HCT116 (cell line): ENCODE measurements at regions of chr6 and their contacts with region 1.

Region 1: DNA sequence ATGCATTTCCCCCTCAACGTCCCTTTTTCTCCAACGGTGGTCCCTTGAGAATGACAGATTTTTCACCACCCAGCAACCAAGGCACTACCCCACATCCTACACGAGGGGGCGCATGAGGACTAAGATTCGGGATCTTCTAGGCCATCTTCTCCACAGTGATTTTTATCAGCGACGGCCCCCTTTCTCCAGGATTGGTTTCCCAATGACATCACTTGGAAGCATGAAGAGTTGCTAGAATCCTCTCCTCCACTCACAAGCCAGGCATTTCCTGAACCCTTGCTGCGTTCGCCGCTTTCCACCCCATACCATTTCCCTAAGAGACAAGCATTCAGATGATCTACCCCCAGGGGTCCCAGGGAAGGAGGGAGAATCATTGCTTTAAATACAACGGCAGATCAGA is 252.0 kb downstream of the HIVEP2 start:
- DNase-seq: peak; percentile 41
- ATAC-seq: peak; percentile 97
- H3K4me3 ChIP-seq: no peak overlapping the region
- H3K27ac ChIP-seq: no peak overlapping the region
- H3K4me1 ChIP-seq: 0 out of 4 replicates have a peak, but pooled peaks cover 0 to 2% of the 10 kb centered on the region in 2 experiments
- H3K27me3 ChIP-seq: no peaks in the 10 kb centered on the region
- CTCF ChIP-seq: peak; percentile 86 to 92 (median 87); a peak in 5 of 6 replicates
- POLR2A ChIP-seq: no peak
- RAD21 ChIP-seq: peak; percentile 96

Region 2: DNA sequence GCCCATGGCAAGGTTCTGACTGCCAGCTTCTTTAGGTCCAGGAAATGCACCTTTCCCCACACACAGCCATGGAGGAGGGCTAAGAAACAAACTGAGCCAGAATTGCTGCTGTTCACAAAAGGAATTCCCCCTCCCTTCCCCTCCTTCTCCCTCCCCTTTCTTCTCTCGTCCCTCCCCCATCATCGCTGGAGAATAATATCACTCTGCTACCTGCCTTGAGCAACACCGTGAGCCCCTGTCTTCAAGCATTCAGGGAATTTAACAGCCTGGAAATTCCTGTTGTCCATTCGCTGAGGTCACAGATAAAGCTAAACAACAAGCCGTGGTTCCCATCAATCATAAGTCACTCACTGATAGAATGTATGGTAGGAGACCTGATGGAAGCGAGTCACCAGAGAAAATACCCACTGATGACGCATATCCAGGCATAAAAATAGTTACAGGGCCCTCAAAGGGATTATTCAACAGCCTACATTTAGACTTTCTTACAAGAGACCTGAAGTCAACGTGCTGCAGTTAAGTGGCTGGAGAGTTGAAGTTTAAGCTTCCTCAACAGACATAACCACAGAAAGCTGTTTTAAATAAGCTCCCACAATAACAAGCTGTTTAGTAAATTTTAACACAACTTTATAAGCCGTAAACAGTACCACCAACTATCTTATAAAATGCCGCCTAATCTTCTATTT is 192.4 kb after region 1 on chr6:
- CTCF ChIA-PET with region 1: no interaction called
- POLR2A ChIA-PET with region 1: no interaction called
- RAD21 ChIA-PET with region 1: no interaction called
- intact Hi-C with region 1: loop called (anchors 2 kb)
- DNase-seq: peak; percentile 94
- ATAC-seq: peak; percentile 91
- H3K4me3 ChIP-seq: peak overlapping the region; percentile 37 to 51
- H3K27ac ChIP-seq: peak overlapping the region; percentile 58
- H3K4me1 ChIP-seq: peaks cover 19 to 38% of the 10 kb centered on the region in 2 experiments
- H3K27me3 ChIP-seq: no peaks in the 10 kb centered on the region
- CTCF ChIP-seq: no peak
- POLR2A ChIP-seq: no peak
- RAD21 ChIP-seq: peak; percentile 46; the same call in 1 of the 2 replicates

Region 3: GRCh38 chr6:142946181-142946923 is 253.4 kb after region 1 on chr6:
- CTCF ChIA-PET with region 1: no interaction called
- POLR2A ChIA-PET with region 1: no interaction called
- RAD21 ChIA-PET with region 1: no interaction called
- intact Hi-C with region 1: loop called (anchors 2 kb)
- DNase-seq: peak; percentile 95
- ATAC-seq: peak; percentile 69
- H3K4me3 ChIP-seq: peak overlapping the region; percentile 74 to 80
- H3K27ac ChIP-seq: peak overlapping the region; percentile 69
- H3K4me1 ChIP-seq: peaks cover 20 to 32% of the 10 kb centered on the region in 2 experiments; a peak in 3 of 4 replicates
- H3K27me3 ChIP-seq: no peaks in the 10 kb centered on the region
- CTCF ChIP-seq: no peak
- POLR2A ChIP-seq: no peak
- RAD21 ChIP-seq: no peak

Region 4: GRCh38 chr6:143026696-143027449 is 333.9 kb after region 1 on chr6:
- CTCF ChIA-PET with region 1: interaction called, 16 read pairs
- POLR2A ChIA-PET with region 1: no interaction called
- RAD21 ChIA-PET with region 1: interaction called, 3 read pairs
- intact Hi-C with region 1: loop called (anchors 1 kb)
- DNase-seq: peak; percentile 7
- ATAC-seq: peak; percentile 83
- H3K4me3 ChIP-seq: no peak overlapping the region
- H3K27ac ChIP-seq: no peak overlapping the region
- H3K4me1 ChIP-seq: no peaks in the 10 kb centered on the region
- H3K27me3 ChIP-seq: no peaks in the 10 kb centered on the region
- CTCF ChIP-seq: peak; percentile 60 to 70 (median 67); a peak in 5 of 6 replicates
- POLR2A ChIP-seq: no peak
- RAD21 ChIP-seq: peak; percentile 77

Region 5: GRCh38 chr6:143279385-143279784 is 586.4 kb after region 1 on chr6:
- CTCF ChIA-PET with region 1: interaction called, 6 read pairs
- POLR2A ChIA-PET with region 1: no interaction called
- RAD21 ChIA-PET with region 1: no interaction called
- intact Hi-C with region 1: loop called (anchors 1 kb)
- DNase-seq: peak; percentile 13
- ATAC-seq: peak; percentile 92
- H3K4me3 ChIP-seq: no peak overlapping the region
- H3K27ac ChIP-seq: no peak overlapping the region
- H3K4me1 ChIP-seq: no peaks in the 10 kb centered on the region
- H3K27me3 ChIP-seq: no peaks in the 10 kb centered on the region
- CTCF ChIP-seq: peak; percentile 46 to 59 (median 48); a peak in 5 of 6 replicates
- POLR2A ChIP-seq: no peak
- RAD21 ChIP-seq: peak; percentile 81

Region 6: DNA sequence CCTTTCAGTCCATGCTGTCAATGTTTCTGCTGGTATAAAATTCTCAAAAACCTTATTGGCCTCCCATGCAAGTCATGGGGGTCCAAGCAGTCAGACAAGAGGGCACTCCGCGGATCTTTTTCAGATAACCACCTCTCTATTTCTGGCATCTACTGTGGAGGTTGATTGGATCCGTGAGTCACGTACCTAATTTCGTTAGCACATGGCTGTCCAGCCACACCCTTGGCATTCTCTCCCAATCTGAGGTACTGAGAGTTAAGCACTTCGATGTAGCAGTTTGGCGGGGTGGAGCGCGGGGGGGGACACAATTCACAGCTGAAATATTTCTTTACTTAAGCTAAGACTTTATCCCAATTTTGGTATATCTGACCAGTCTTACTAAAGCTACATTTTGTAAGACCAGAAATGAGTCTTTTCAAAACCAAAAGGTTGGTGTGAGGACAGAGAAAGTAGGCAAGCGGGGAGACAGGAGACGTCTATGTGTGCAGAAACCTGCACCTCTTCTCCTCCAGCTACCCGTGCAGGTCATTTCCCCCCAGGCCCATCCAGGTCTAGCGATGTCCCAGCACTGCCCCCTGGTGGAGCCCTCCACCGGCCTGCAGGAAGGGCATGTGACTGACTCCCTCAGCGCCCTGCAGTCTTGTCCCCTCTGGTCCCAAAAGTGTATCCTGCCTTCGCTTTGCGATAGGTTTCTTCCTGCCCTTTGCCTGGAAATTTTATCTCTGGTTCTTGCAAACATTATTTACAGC is 644.4 kb after region 1 on chr6:
- CTCF ChIA-PET with region 1: interaction called, 3 read pairs
- POLR2A ChIA-PET with region 1: no interaction called
- RAD21 ChIA-PET with region 1: no interaction called
- intact Hi-C with region 1: loop called (anchors 5 kb)
- DNase-seq: peak; percentile 18
- ATAC-seq: peak; percentile 98
- H3K4me3 ChIP-seq: no peak overlapping the region
- H3K27ac ChIP-seq: no peak overlapping the region
- H3K4me1 ChIP-seq: peaks cover 0 to 22% of the 10 kb centered on the region in 2 experiments; a peak in 3 of 4 replicates
- H3K27me3 ChIP-seq: no peaks in the 10 kb centered on the region
- CTCF ChIP-seq: peak in 2 of 3 experiments; percentile 78 to 82; a peak in 4 of 6 replicates
- POLR2A ChIP-seq: no peak
- RAD21 ChIP-seq: peak; percentile 54; the same call in 1 of the 2 replicates

Region 7: DNA sequence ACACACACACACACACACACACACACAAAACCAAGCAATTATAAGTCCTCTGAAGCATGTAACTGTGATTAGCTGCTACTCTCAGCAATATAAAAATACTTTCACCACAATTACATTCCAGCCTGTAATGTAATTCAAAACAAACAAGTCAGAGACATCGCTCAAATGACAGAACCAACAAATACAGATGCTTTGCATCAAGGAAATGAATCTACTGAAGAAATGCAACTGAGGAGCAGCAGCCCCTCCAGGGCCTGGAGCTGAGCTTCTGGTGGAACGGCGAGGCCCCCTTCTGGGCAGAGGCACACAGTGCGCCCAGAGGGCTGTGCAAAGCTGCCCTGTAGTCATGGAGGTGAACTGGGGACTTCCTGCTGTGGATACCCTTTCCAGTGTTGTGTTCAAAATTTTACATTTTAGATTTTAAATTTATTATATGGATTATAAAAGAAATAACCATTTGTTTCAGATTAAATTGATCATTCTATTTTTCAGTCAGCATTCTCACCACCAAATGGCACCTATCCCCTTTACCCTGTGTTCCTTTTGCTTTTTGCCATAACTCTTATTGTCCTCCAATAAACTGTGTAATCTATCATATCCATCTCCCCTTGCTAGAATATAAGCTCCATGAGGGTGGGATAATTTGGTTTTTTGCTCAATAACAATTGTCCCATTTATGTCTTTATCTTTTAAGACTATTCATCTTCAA is 734.3 kb after region 1 on chr6:
- CTCF ChIA-PET with region 1: interaction called, 9 read pairs
- POLR2A ChIA-PET with region 1: no interaction called
- RAD21 ChIA-PET with region 1: interaction called in 1 of 2 experiments, 10 read pairs
- intact Hi-C with region 1: loop called (anchors 1 kb)
- DNase-seq: no peak
- ATAC-seq: peak; percentile 99
- H3K4me3 ChIP-seq: no peak overlapping the region
- H3K27ac ChIP-seq: no peak overlapping the region
- H3K4me1 ChIP-seq: no peaks in the 10 kb centered on the region
- H3K27me3 ChIP-seq: no peaks in the 10 kb centered on the region
- CTCF ChIP-seq: peak; percentile 71 to 98 (median 95)
- POLR2A ChIP-seq: no peak
- RAD21 ChIP-seq: peak; percentile 92